Sigmoid colon (tissue), 7 donors: ENCODE measurements at regions of chr9 and their contacts with region 1.

Region 1: DNA sequence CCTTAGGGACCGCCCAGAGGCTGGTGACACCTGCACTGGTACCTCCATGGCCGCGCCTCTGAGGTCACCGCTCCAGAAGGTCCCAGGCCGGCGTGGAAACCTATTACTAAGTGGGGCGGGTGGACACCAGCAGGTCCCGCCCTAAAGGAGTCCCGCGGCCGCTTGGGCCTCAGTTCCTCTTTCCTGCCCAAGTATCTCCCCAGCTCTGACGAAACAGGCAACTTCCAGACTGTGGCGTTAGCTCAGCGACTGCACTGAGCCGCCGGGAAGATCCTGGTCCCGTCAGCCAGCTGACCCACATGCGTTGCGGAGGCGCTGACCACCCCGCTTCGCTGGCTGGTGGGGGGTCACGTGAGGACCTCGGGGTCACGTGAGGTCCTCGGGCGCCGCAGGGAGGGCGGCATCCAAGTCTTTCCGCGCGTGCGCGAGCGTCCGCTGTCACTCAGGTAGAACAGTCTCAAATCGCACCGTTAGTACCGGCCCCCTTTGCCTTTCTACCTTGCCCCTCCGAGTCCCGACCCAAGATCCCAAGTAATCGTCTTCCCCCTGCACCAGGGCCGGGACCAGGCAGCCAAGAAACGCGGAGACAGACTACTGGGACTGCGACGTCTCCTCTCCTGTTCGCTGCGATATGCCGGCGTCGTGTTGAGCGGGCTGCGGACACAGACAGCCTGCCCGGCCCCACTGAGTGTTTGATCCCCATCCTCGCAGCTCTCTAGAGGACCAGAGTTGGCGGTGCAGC is 53.7 kb upstream of the KDM4C start:
- DNase-seq: peak; percentile 93
- H3K4me3 ChIP-seq: peak overlapping the region; percentile 51 to 66 (median 52)
- H3K27ac ChIP-seq: peak overlapping the region; percentile 73 to 87 (median 75)
- H3K4me1 ChIP-seq: peaks cover 0 to 10% (median 0%) of the 10 kb centered on the region in 4 donors
- H3K27me3 ChIP-seq: no peaks in the 10 kb centered on the region
- CTCF ChIP-seq: no peak
- EP300 ChIP-seq: no peak
- POLR2A ChIP-seq: peak in 1 of 2 donors; percentile 18

Region 2: GRCh38 chr9:6645355-6646292 is 58.4 kb before region 1 on chr9 and contains the start of gene GLDC:
- intact Hi-C with region 1: loop called (anchors 10 kb)
- DNase-seq: no peak
- H3K4me3 ChIP-seq: peak within 1 kb of the TSS in 3 of 4 donors; percentile 35 to 46 (median 46)
- H3K27ac ChIP-seq: no peak within 1 kb of the TSS
- H3K4me1 ChIP-seq: peaks cover 0 to 22% (median 19%) of the 10 kb centered on the region in 4 donors
- H3K27me3 ChIP-seq: peaks cover 12 to 57% (median 40%) of the 10 kb centered on the region in 3 donors
- CTCF ChIP-seq: no peak
- EP300 ChIP-seq: no peak
- POLR2A ChIP-seq: no peak
- total RNA-seq, gene GLDC: 1.2 TPM in 1 of 4 donors, not detected in the others

Region 3: DNA sequence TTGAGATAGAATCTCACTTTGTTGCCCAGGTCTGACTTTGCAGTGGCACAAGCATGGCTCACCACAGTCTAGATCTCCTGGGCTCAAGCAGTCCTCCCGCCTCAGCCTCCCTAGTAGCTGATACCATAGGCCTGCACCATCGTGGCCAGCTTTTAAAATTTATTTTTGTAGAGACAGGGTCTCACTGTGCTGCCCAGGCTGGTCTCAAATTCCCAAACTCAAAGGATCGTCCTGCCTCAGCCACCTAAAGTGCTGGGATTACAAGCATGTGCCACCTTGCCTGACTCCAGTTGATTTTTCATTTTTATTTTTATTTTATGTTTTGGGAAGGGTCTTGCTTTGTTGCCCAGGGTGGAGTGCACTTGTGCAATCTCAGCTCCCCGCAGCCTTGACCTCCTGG is 16.9 kb before region 1 on chr9:
- intact Hi-C with region 1: no loop called
- DNase-seq: no peak
- H3K4me3 ChIP-seq: no peak overlapping the region
- H3K27ac ChIP-seq: no peak overlapping the region
- H3K4me1 ChIP-seq: peaks cover 0 to 5% (median 4%) of the 10 kb centered on the region in 4 donors
- H3K27me3 ChIP-seq: no peaks in the 10 kb centered on the region
- CTCF ChIP-seq: no peak
- EP300 ChIP-seq: no peak
- POLR2A ChIP-seq: no peak

Region 4: DNA sequence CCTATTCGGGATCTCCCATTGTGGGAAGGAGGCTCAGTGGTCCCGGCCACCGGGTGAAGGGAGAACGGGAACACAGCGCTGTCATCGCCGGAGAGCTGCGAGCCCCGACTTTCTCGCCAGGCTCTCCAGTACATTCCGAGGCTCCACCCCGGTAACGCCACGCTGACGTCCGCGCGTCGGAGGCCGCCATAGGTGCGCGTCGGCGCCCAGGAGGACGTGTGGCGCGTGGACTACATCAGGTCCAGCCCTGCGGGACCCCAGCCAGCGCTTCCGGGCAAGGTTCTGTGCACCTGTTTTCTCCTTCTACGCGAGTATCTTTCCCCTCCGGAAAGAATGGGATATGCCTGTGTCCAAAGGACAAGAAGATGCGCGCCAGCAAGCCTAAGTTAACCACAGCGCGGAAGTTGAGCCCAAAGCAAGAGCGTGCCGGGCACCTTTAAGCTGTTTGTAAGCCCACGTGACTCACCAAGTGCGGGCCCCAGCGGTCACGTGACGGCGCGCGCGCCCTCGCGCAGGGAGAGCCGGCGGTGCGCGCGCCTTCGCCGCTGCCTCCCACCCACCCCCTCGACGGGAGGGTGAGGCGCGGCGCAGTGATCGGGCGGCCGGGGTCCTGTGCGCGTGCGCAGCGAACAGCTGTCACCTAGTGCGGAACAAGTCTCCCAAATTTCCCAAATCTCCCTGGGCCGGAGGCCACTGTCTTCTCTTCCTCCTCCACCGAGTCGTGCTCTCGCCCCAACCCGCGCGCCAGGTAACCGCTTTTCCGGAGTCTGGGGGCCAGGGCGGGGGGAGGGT is 53.6 kb after region 1 on chr9 and contains the start of gene KDM4C:
- intact Hi-C with region 1: loop called (anchors 1 kb)
- DNase-seq: peak; percentile 98
- H3K4me3 ChIP-seq: peak within 1 kb of the TSS; percentile 74 to 99 (median 89)
- H3K27ac ChIP-seq: peak within 1 kb of the TSS; percentile 95 to 99 (median 98)
- H3K4me1 ChIP-seq: peaks cover 0 to 19% (median 10%) of the 10 kb centered on the region in 4 donors
- H3K27me3 ChIP-seq: no peaks in the 10 kb centered on the region
- CTCF ChIP-seq: no peak
- EP300 ChIP-seq: peak in 2 of 4 donors; percentile 36 to 64
- POLR2A ChIP-seq: peak; percentile 74 to 88
- total RNA-seq, gene KDM4C: 28.8 to 33.5 (median 29.8) TPM